Endothelial cell of umbilical vein (primary cell): ENCODE measurements at regions of chr15 and their contacts with region 1.

Region 1: GRCh38 chr15:40357723-40358470 is at the start of gene DISP2:
- DNase-seq: peak; percentile 84
- H3K4me3 ChIP-seq: peak within 1 kb of the TSS; percentile 35 to 54 (median 41)
- H3K27ac ChIP-seq: no peak within 1 kb of the TSS
- H3K4me1 ChIP-seq: peaks cover 8% of the 10 kb centered on the region
- H3K27me3 ChIP-seq: peaks cover 9 to 13% of the 10 kb centered on the region in 2 experiments
- CTCF ChIP-seq: no peak
- POLR2A ChIP-seq: no peak
- total RNA-seq, gene DISP2: 0.65 and 1.2 TPM in 2 replicates

Region 2: DNA sequence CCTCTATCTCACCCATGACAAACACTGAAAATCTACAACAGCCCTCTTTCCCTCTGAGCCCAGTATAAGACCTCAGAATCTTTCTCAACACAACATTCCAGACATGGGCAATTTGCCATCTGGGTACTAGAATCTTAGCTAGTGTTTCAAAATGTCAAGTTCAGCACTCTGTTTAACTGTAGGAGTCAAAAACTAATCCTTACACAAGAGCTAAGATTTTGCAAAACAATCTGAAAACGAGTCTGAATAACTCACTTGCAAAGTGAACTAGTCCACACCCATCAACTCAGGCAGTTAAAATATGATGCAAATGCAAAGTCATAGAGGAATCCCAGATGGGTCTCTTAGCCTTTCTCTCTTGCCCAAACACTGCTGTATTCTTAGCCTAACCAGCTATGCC is 505.6 kb before region 1 on chr15:
- CTCF ChIA-PET with region 1: no interaction called
- POLR2A ChIA-PET with region 1: no interaction called
- dilution Hi-C with region 1: no loop called
- intact Hi-C with region 1: no loop called
- DNase-seq: no peak
- H3K4me3 ChIP-seq: no peak overlapping the region
- H3K27ac ChIP-seq: peak overlapping the region; percentile 35
- H3K4me1 ChIP-seq: peaks cover 13% of the 10 kb centered on the region
- H3K27me3 ChIP-seq: no peaks in the 10 kb centered on the region
- CTCF ChIP-seq: no peak
- POLR2A ChIP-seq: no peak

Region 3: DNA sequence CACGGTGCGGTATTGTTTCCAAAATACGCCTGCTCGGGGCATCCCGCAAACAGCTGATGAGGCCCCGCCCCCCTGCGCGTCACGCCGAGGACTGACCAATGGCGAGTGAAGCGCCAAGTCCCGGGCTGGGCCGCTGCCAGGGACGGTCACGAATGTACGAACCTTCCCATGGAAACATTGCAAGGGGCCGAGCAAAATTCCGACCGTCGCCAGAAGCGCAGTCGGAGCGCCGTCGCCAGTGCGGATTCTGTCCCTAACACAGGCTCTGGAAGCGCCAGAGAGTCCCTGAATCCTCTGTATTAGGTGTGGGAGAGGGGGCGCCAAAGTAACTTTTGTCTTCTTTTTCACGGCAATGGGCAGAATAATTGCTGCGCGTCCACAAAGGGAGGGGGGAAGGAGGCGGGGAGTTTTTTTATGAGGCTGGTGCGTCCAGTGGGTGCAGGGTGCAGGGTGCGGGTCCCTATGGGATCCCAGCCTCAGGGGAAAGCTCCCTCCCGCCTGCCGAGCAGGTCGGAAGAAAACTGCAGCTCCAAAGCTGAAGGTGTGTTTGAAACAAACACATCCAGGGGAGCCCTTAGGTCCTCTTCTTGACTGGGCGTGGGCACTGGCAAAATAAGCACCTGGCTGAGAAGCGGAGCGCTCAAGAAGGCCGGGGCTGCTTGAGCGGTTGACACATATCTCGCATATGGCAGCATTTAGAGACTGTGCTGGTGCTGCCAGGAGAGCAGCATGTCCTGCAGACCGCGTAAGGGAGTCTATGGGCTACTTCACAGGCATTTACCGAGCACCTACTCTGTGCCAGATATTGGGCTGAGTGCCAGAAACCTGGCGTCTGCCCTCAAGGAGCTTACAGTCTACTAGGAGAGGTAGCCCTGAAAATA is 248.8 kb before region 1 on chr15 and contains the start of gene BMF:
- CTCF ChIA-PET with region 1: no interaction called
- POLR2A ChIA-PET with region 1: no interaction called
- dilution Hi-C with region 1: no loop called
- intact Hi-C with region 1: no loop called
- DNase-seq: peak; percentile 99
- H3K4me3 ChIP-seq: peak within 1 kb of the TSS; percentile 61 to 79 (median 72)
- H3K27ac ChIP-seq: peak within 1 kb of the TSS; percentile 37
- H3K4me1 ChIP-seq: peaks cover 10% of the 10 kb centered on the region
- H3K27me3 ChIP-seq: peaks cover 4 to 19% of the 10 kb centered on the region in 2 experiments
- CTCF ChIP-seq: peak; percentile 35 to 48
- POLR2A ChIP-seq: no peak
- total RNA-seq, gene BMF: 9.8 and 13.9 TPM in 2 replicates

Region 4: DNA sequence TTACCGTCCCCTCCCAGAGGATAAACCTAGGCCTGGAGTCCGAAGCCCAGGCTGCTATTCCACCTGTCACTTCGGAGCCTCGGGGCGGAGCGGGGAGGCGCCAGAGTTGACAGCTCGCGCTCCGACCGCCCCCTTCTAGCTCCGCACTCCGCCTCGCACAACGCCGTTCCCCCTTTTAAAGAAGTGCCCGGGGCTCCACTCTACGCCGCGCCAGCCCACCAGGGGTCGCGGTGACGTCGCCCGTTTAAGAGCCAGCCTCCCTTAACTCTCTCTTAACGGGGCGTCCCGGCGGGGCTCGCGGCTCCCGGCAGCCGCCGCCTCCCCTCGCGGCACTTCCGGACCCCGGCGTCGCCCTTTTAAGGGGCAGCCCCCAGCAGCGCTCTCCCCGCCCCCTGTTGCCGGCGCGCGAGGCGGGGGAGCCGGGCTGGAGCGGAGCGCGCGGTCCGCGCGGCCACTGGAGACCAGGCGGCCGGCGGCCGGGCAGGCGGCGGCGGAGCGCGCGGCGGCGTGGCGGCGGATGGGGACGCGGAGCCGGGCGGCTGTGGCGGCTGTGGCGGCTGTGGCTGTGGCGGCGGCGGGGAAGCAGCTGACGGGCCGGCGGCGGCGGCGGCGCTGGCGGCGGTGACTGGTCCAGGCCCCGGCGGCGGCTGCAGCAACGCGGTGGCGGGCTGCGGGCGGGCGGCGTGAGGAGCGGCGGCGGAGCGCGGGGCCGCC is 34.5 kb before region 1 on chr15 and contains the start of gene INAFM2:
- CTCF ChIA-PET with region 1: interaction called, 3 read pairs
- POLR2A ChIA-PET with region 1: no interaction called
- dilution Hi-C with region 1: no loop called
- intact Hi-C with region 1: loop called (anchors 1 kb)
- DNase-seq: peak; percentile 98
- H3K4me3 ChIP-seq: peak within 1 kb of the TSS; percentile 41 to 67 (median 57)
- H3K27ac ChIP-seq: peak within 1 kb of the TSS; percentile 8
- H3K4me1 ChIP-seq: peaks cover 50% of the 10 kb centered on the region
- H3K27me3 ChIP-seq: no peaks in the 10 kb centered on the region
- CTCF ChIP-seq: peak; percentile 74 to 83
- POLR2A ChIP-seq: peak; percentile 67
- total RNA-seq, gene INAFM2: 23.6 and 24.1 TPM in 2 replicates